Caco-2 (cell line): ENCODE measurements at regions of chr7 and their contacts with region 1.

Region 1: GRCh38 chr7:127409629-127410028 is 17.1 kb upstream of the ZNF800 start:
- DNase-seq: peak in 1 of 2 experiments; percentile 10
- H3K4me3 ChIP-seq: no peak overlapping the region
- H3K4me3 Mint-ChIP-seq: no peak overlapping the region
- H3K27ac Mint-ChIP-seq: no peak overlapping the region
- H3K4me1 ChIP-seq: no peaks in the 10 kb centered on the region
- H3K4me1 Mint-ChIP-seq: no peaks in the 10 kb centered on the region
- H3K27me3 ChIP-seq: no peaks in the 10 kb centered on the region
- H3K27me3 Mint-ChIP-seq: peaks cover 19% of the 10 kb centered on the region
- CTCF ChIP-seq: peak in 1 of 2 experiments; percentile 41

Region 2: GRCh38 chr7:127347567-127348246 is 61.9 kb before region 1 on chr7:
- CTCF ChIA-PET with region 1: interaction called, 5 read pairs
- POLR2A ChIA-PET with region 1: no interaction called
- intact Hi-C with region 1: loop called (anchors 1 kb)
- DNase-seq: peak; percentile 54 to 82
- H3K4me3 ChIP-seq: peak overlapping the region; percentile 31
- H3K4me3 Mint-ChIP-seq: peak overlapping the region; percentile 64
- H3K27ac Mint-ChIP-seq: no peak overlapping the region
- H3K4me1 ChIP-seq: no peaks in the 10 kb centered on the region
- H3K4me1 Mint-ChIP-seq: no peaks in the 10 kb centered on the region
- H3K27me3 ChIP-seq: no peaks in the 10 kb centered on the region
- H3K27me3 Mint-ChIP-seq: peaks cover 13% of the 10 kb centered on the region
- CTCF ChIP-seq: peak; percentile 6 to 13